CD8-positive, alpha-beta memory T cell (primary cell): ENCODE measurements at regions of chr11 and their contacts with region 1.

Region 1: DNA sequence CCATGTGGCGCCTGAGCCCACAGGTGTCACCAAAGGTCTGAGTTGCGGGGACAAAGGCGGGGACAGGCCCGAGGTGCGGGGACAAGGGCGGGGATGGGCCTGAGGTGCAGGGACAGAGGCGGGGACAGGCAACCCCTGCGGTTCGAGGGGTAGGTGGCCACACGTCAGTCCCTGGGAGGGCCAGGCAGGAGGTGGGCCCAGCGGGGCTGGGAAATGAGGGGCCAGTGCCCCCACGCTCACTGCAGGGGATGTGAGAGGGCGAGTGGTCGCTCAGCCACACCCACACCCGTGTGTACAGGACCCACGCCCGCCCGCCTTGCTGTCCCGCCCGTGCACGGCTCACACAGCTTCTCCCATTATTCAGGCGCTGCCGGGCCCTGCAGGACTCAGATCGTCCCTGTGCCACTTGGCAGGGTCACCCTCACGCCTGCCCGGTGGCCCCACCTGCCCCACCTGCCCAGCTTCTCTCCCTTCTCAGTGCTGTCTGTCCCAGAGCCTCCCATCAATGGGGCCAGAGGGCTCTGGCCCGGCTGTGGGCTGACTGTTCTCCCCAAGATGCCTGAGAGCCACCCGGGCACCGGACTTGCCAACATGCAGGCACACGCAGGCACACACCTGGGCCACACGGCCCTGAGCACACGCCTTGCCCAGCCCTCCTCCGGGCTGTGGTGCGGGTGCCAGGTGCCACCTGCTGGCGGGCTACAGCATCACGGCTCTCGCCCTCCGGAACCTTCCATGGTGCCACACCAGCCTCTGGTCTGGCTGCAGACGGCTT is 14.2 kb upstream of the MUC6 start:
- DNase-seq: peak; percentile 53 to 77 (median 63)
- H3K4me3 ChIP-seq: no peak overlapping the region
- H3K4me3 Mint-ChIP-seq: no peak overlapping the region
- H3K27ac ChIP-seq: no peak overlapping the region
- H3K27ac Mint-ChIP-seq: no peak overlapping the region
- H3K4me1 ChIP-seq: peaks cover 7% of the 10 kb centered on the region
- H3K4me1 Mint-ChIP-seq: peaks cover 0 to 5% (median 4%) of the 10 kb centered on the region in 3 donors
- H3K27me3 ChIP-seq: no peaks in the 10 kb centered on the region
- H3K27me3 Mint-ChIP-seq: peaks cover 10 to 25% of the 10 kb centered on the region in 2 donors

Region 2: GRCh38 chr11:848380-848931 is 202.3 kb before region 1 on chr11:
- CTCF ChIA-PET with region 1: interaction called, 48 read pairs
- POLR2A ChIA-PET with region 1: interaction called, 3 read pairs
- DNase-seq: peak; percentile 59 to 77 (median 60)
- H3K4me3 ChIP-seq: no peak overlapping the region
- H3K4me3 Mint-ChIP-seq: peak overlapping the region; percentile 32 to 86 (median 58)
- H3K27ac ChIP-seq: no peak overlapping the region
- H3K27ac Mint-ChIP-seq: no peak overlapping the region
- H3K4me1 ChIP-seq: peaks cover 23% of the 10 kb centered on the region
- H3K4me1 Mint-ChIP-seq: peaks cover 0 to 19% (median 6%) of the 10 kb centered on the region in 3 donors
- H3K27me3 ChIP-seq: peaks cover 8% of the 10 kb centered on the region
- H3K27me3 Mint-ChIP-seq: peaks cover 3 to 6% of the 10 kb centered on the region in 2 donors